MCF 10A (cell line): ENCODE measurements at regions of chr6 and their contacts with region 1.

Region 1: DNA sequence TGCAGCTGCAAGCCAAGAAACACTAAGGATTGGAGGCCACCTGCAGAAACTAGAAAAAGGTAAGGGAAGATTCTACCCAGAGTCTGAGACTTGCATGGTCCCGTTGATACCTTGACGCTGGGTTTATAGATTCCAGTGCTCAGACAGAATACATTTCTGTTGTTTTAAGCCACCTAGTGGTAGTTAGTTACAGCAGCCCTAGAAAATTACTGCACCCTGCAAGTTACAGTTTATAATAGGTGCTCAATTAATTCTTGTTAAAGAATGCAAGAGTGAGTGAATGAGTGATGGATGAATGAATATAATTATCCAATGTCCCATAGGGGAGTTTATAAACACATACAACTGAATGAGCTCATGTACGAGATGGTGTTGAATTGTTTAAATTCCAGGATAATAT is 453.1 kb upstream of the SLC35B3 start:
- DNase-seq: peak; percentile 30
- H3K4me3 Mint-ChIP-seq: no peak overlapping the region
- H3K27ac Mint-ChIP-seq: no peak overlapping the region
- H3K4me1 Mint-ChIP-seq: no peaks in the 10 kb centered on the region
- H3K27me3 Mint-ChIP-seq: no peaks in the 10 kb centered on the region
- CTCF ChIP-seq: peak; percentile 32

Region 2: GRCh38 chr6:8539446-8539845 is 349.0 kb before region 1 on chr6:
- CTCF ChIA-PET with region 1: interaction called, 4 read pairs
- POLR2A ChIA-PET with region 1: no interaction called
- intact Hi-C with region 1: loop called (anchors 1 kb)
- DNase-seq: peak; percentile 55
- H3K4me3 Mint-ChIP-seq: no peak overlapping the region
- H3K27ac Mint-ChIP-seq: peak overlapping the region; percentile 13
- H3K4me1 Mint-ChIP-seq: peaks cover 9% of the 10 kb centered on the region
- H3K27me3 Mint-ChIP-seq: no peaks in the 10 kb centered on the region
- CTCF ChIP-seq: peak; percentile 54

Region 3: DNA sequence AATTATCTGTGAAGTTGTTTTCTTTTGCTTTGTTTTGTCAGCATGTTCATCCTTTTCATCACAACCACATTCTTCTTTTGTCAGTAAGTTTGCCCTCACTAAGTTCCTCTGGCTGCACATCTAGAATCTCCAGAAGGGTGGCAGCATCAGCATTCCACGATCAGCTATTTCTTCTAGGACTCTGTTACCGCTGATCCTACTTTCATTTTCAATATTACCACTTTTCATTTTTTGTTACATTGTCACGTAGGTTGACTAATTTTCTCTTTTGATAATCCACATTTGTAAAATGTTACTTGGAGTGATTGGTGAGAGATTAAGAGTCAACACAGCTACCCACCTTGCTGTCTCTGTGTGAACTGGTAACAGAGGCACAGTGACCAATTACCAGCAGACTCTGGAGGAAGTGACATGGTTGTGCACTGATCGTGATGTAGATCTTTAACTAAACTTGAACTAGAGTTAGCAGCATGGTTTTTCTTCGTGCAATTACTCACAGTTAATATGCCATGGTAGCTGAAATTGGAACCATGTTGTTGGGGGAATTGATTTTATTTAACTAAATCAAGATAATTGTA is 145.2 kb before region 1 on chr6:
- CTCF ChIA-PET with region 1: interaction called, 6 read pairs
- POLR2A ChIA-PET with region 1: no interaction called
- intact Hi-C with region 1: loop called (anchors 10 kb)
- DNase-seq: peak; percentile 42
- H3K4me3 Mint-ChIP-seq: peak overlapping the region; percentile 69
- H3K27ac Mint-ChIP-seq: peak overlapping the region; percentile 21
- H3K4me1 Mint-ChIP-seq: peaks cover 12% of the 10 kb centered on the region
- H3K27me3 Mint-ChIP-seq: no peaks in the 10 kb centered on the region
- CTCF ChIP-seq: no peak